IMR-90 (cell line): ENCODE measurements at regions of chr2 and their contacts with region 1.

Region 1: DNA sequence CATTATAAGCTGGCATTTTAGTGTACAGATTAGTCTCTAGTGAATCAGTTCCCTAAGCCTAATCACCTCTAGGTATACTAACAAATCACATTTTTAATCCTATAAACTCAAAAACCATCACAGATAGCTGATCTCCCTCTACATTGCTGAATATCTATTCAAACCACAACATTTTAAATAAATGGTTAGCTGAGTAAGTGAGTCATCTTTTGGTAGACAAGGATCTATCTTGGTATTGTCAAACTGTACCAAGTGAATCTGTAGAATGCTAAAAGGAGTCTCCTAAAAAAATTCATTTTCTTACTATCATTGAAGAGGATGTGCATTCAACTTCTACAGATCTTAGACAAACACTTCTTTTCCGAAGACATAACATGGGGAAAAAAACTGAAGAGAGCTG is 40.7 kb downstream of the INO80D start:
- DNase-seq: peak; percentile 58
- ATAC-seq: peak; percentile 93
- H3K4me3 ChIP-seq: no peak overlapping the region
- H3K27ac ChIP-seq: no peak overlapping the region
- H3K4me1 ChIP-seq: no peaks in the 10 kb centered on the region
- H3K27me3 ChIP-seq: no peaks in the 10 kb centered on the region
- CTCF ChIP-seq: no peak
- POLR2A ChIP-seq: no peak
- RAD21 ChIP-seq: no peak

Region 2: GRCh38 chr2:205984381-205984780 is 60.9 kb before region 1 on chr2:
- CTCF ChIA-PET with region 1: no interaction called
- POLR2A ChIA-PET with region 1: no interaction called
- dilution Hi-C with region 1: no loop called
- in situ Hi-C with region 1: no loop called
- intact Hi-C with region 1: no loop called
- DNase-seq: no peak
- ATAC-seq: no peak
- H3K4me3 ChIP-seq: no peak overlapping the region
- H3K27ac ChIP-seq: no peak overlapping the region
- H3K4me1 ChIP-seq: no peaks in the 10 kb centered on the region
- H3K27me3 ChIP-seq: no peaks in the 10 kb centered on the region
- CTCF ChIP-seq: no peak
- POLR2A ChIP-seq: no peak
- RAD21 ChIP-seq: no peak

Region 3: DNA sequence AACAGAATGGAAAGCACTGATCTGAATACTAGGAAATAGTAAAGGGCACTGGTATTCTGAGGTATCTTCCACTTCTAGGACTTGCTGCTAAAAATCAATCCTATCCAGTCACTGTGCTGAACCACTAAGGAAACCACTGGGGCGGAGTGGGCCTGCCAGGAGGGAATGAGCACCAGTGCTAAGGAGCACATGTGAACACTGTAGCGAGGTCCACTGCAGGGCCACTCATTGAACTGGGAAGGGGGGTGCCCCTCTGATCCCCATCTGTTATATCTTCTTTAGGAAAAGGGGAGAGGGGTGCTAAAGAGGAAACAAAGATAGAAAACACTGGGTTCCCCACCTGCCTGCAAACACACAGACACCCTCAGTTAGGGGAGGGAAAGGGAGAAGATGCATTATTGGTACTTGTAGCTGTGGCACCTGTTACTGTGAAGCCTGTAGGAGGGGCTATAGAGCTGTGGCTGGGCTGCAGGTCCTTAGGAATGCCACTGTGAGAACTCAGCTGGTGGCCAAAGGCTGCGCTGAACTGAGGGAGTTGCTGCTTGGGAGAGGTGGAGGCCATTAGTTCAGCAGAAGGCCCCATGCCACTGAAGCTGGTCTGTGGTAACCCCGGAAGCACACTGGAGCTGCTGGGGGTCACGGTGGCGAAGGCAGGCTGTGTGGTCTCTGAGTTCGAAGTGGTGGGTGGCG is 41.1 kb before region 1 on chr2:
- CTCF ChIA-PET with region 1: no interaction called
- POLR2A ChIA-PET with region 1: no interaction called
- dilution Hi-C with region 1: no loop called
- in situ Hi-C with region 1: no loop called
- intact Hi-C with region 1: loop called (anchors 1 kb)
- DNase-seq: peak; percentile 18
- ATAC-seq: peak; percentile 42; the same call in 1 of the 2 replicates
- H3K4me3 ChIP-seq: no peak overlapping the region
- H3K27ac ChIP-seq: no peak overlapping the region
- H3K4me1 ChIP-seq: peaks cover 3% of the 10 kb centered on the region
- H3K27me3 ChIP-seq: no peaks in the 10 kb centered on the region
- CTCF ChIP-seq: peak; percentile 27; the same call in 1 of the 2 replicates
- POLR2A ChIP-seq: no peak
- RAD21 ChIP-seq: peak; percentile 46